ENCODE measurements at regions of chr2 and their contacts with region 1.

Region 1: DNA sequence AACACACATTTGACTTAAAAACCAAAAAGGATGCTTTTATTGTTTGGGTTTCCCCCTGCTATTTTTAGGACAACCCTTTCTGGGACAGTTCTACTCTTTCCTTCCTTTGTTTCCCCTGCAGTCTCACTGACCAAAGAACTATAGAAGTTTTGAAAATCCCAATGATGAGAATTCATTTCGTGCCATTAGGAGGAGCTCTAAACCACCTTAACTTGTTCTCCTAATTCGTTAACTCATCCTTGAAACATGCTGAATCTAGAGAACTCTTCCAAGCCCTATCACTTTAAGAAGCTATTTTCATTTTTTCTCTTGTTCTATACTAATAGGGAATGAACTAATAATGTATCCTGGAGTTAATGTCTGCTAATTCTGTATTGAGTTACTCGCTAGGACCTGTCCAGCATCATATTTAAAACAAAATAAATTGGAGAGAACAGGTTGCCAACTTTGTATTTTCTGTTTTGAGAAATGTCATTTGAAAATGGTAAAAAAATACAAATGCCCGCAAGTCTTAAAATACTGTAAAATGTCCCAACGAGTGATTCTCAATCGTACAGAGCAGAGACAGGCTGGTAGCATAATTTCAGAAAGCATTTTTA is 62.9 kb downstream of the AFTPH start:
- DNase-seq: no peak
- H3K4me3 Mint-ChIP-seq: no peak overlapping the region
- H3K27ac Mint-ChIP-seq: no peak overlapping the region
- H3K4me1 Mint-ChIP-seq: peaks cover 17% of the 10 kb centered on the region
- H3K27me3 Mint-ChIP-seq: no peaks in the 10 kb centered on the region

Region 2: GRCh38 chr2:64675860-64676259 is 88.9 kb after region 1 on chr2:
- intact Hi-C with region 1: no loop called
- DNase-seq: peak; percentile 30
- H3K4me3 Mint-ChIP-seq: no peak overlapping the region
- H3K27ac Mint-ChIP-seq: peak overlapping the region; percentile 56
- H3K4me1 Mint-ChIP-seq: peaks cover 48% of the 10 kb centered on the region
- H3K27me3 Mint-ChIP-seq: no peaks in the 10 kb centered on the region

Region 3: DNA sequence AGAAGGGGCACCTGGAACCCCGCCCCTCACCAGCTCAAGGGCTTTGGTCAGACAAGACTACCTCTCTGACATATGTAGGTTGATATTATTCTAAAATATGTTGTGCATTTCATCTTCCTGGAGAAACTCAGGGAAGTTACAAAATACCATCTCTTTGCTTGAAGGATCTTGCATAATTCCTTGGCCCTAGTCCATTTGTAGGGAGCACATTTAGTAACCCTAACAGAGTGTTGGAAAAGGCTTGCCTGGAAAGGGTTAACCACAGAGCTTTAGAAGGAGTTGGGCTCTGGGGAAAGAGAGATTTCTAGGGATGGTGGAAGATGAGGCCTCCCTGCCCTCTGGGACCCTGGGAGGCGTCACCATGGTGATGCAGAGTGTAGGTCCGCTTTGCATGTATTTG is 259.2 kb after region 1 on chr2:
- intact Hi-C with region 1: no loop called
- DNase-seq: no peak
- H3K4me3 Mint-ChIP-seq: no peak overlapping the region
- H3K27ac Mint-ChIP-seq: no peak overlapping the region
- H3K4me1 Mint-ChIP-seq: no peaks in the 10 kb centered on the region
- H3K27me3 Mint-ChIP-seq: no peaks in the 10 kb centered on the region

Region 4: GRCh38 chr2:64865073-64865830 is 278.3 kb after region 1 on chr2:
- intact Hi-C with region 1: loop called (anchors 1 kb)
- DNase-seq: peak; percentile 61
- H3K4me3 Mint-ChIP-seq: peak overlapping the region; percentile 78
- H3K27ac Mint-ChIP-seq: peak overlapping the region; percentile 60
- H3K4me1 Mint-ChIP-seq: peaks cover 6% of the 10 kb centered on the region
- H3K27me3 Mint-ChIP-seq: peaks cover 13% of the 10 kb centered on the region

Region 5: DNA sequence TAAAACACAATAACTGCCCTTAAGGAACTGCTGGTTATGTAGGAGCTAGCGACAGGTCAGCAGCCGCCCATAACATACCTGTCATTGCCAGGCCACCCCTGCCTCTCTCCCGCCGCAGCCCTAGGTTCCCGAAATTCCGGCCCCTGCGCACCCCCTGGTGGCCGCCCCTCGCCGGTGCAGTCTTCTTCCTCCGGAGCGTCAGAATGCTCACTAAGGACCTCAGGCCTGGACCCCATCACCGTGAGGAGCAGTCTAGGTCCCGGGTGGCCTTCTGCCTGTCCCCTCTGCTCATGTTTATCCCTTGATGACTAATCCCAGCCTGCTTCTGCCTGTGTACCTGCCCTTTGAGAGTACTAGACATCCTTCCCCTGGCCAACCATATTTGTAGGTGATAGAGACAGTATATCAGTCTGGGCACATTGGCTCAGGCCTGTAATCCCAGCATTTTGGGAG is 286.5 kb after region 1 on chr2:
- intact Hi-C with region 1: loop called (anchors 1 kb)
- DNase-seq: peak; percentile 74
- H3K4me3 Mint-ChIP-seq: no peak overlapping the region
- H3K27ac Mint-ChIP-seq: no peak overlapping the region
- H3K4me1 Mint-ChIP-seq: peaks cover 8% of the 10 kb centered on the region
- H3K27me3 Mint-ChIP-seq: peaks cover 26% of the 10 kb centered on the region